CD14-positive monocyte (primary cell): ENCODE measurements at regions of chr21 and their contacts with region 1.

Region 1: DNA sequence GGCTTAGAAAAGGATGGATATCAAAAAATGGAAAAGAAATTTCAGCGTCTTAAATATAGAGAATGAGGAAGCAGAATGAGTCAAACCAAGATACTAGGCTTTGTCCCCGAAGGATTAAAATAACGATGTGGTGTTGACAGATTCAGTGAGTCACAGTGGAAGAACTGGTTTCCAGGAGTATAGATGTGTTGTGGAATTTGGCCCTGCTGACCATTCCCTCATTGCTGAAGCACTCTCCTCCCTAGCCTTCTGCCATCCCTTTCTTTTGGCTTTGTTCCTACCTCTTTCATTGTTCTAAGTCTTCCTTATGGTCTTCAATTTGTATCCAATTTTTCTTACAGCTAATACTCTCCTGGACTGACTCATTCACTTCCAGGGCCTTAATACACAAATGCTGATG is 23.1 kb upstream of the USP25 start:
- DNase-seq: no peak
- H3K4me3 ChIP-seq: no peak overlapping the region
- H3K4me3 Mint-ChIP-seq: no peak overlapping the region
- H3K27ac ChIP-seq: no peak overlapping the region
- H3K27ac Mint-ChIP-seq: peak overlapping the region in 1 of 7 donors; percentile 26
- H3K4me1 ChIP-seq: no peaks in the 10 kb centered on the region
- H3K4me1 Mint-ChIP-seq: no peaks in the 10 kb centered on the region
- H3K27me3 ChIP-seq: no peaks in the 10 kb centered on the region
- H3K27me3 Mint-ChIP-seq: peaks cover 0 to 4% (median 0%) of the 10 kb centered on the region in 3 donors
- CTCF ChIP-seq: no peak

Region 2: DNA sequence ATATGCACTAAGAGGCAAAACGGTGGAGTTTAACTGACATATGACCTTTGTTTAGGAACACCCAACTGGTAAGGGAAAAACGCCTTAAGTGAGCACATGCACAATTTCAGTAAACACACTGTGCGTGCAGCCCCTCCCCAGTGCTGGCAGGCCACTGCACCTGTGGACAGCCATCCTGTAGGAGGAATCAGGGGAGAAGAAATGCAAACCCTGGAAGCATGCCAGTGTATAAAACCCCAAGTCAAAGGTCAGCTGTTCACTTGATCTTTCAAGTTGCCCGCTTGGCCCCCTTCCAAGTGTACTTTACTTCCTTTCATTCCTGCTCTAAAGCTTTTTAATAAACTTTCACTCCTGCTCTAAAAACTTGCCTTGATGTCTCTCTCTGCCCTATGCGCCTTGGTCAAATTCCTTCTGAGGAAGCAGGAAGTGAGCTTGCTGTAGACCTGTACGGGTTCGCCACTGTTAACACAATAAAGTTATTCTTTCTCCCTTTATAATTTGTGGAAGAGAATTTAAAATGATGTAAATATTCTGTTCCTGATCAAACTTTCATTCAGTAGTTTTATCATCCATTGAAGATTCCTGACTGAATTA is 54.9 kb after region 1 on chr21:
- intact Hi-C with region 1: loop called in 1 of 2 experiments (anchors 10 kb)
- DNase-seq: no peak
- H3K4me3 ChIP-seq: no peak overlapping the region
- H3K4me3 Mint-ChIP-seq: no peak overlapping the region
- H3K27ac ChIP-seq: peak overlapping the region in 1 of 2 donors; percentile 27
- H3K27ac Mint-ChIP-seq: peak overlapping the region in 1 of 7 donors; percentile 47
- H3K4me1 ChIP-seq: no peaks in the 10 kb centered on the region
- H3K4me1 Mint-ChIP-seq: peaks cover 20% of the 10 kb centered on the region
- H3K27me3 ChIP-seq: no peaks in the 10 kb centered on the region
- H3K27me3 Mint-ChIP-seq: no peaks in the 10 kb centered on the region
- CTCF ChIP-seq: no peak

Region 3: DNA sequence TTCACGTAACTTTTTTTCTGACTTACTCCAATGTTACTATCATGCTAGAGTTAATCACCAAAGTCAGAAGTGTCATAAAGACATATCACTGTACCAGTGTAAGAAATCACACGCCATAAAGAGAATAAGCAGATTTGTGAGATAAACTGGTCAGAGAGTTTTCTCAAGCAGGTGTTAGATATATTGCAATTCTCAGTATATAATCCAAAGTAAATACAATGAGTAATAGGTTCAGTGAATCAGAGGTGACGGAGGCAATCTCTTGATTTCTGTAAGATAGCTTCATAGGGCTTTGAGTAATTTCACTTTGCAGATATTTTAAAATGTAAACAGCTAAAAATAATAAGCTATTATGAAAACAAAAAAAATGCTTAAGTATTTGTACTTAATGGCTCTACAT is 141.9 kb after region 1 on chr21:
- intact Hi-C with region 1: no loop called
- DNase-seq: no peak
- H3K4me3 ChIP-seq: no peak overlapping the region
- H3K4me3 Mint-ChIP-seq: no peak overlapping the region
- H3K27ac ChIP-seq: no peak overlapping the region
- H3K27ac Mint-ChIP-seq: peak overlapping the region in 1 of 7 donors; percentile 32
- H3K4me1 ChIP-seq: no peaks in the 10 kb centered on the region
- H3K4me1 Mint-ChIP-seq: no peaks in the 10 kb centered on the region
- H3K27me3 ChIP-seq: no peaks in the 10 kb centered on the region
- H3K27me3 Mint-ChIP-seq: no peaks in the 10 kb centered on the region
- CTCF ChIP-seq: no peak

Region 4: GRCh38 chr21:16061194-16061593 is 354.5 kb after region 1 on chr21:
- intact Hi-C with region 1: no loop called
- DNase-seq: no peak
- H3K4me3 ChIP-seq: no peak overlapping the region
- H3K4me3 Mint-ChIP-seq: no peak overlapping the region
- H3K27ac ChIP-seq: no peak overlapping the region
- H3K27ac Mint-ChIP-seq: no peak overlapping the region
- H3K4me1 ChIP-seq: no peaks in the 10 kb centered on the region
- H3K4me1 Mint-ChIP-seq: no peaks in the 10 kb centered on the region
- H3K27me3 ChIP-seq: no peaks in the 10 kb centered on the region
- H3K27me3 Mint-ChIP-seq: no peaks in the 10 kb centered on the region
- CTCF ChIP-seq: no peak